ENCODE measurements at regions of chr5 and their contacts with region 1.

Region 1: DNA sequence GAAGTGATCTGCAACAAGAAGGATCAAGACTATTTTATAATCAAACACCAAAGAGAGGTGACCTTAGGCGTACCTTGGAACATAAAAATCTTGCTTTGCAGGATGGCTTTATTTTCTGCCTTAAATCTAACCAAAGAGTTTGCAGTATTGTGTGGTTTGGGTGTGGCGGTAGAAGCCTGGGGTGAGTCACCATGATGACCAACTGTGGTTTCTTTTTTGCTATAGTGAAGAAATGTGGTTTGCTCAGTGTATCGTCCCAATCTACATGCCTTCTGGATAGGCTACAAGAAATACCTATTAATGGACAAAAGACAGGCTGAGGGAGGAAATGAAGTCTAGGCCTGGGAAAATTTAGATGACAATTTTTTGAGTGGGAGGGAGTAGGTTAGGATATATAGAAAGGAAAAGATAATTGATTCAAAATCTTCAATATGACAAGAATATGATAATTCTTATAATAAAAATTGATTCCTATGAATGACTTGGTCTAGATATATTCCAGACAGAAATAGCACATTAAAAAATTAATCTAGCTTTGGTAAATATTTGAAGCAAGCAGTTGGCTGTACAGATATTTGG is 5.0 kb upstream of the CAST start:
- DNase-seq: peak; percentile 73 to 97
- H3K4me3 ChIP-seq: no peak overlapping the region; the same call in 1 of the 2 replicates
- H3K27ac ChIP-seq: peak overlapping the region; percentile 94
- H3K4me1 ChIP-seq: peaks cover 87% of the 10 kb centered on the region
- H3K27me3 ChIP-seq: no peaks in the 10 kb centered on the region
- CTCF ChIP-seq: no peak

Region 2: GRCh38 chr5:94661086-94661485 is 1996.1 kb before region 1 on chr5:
- CTCF ChIA-PET with region 1: no interaction called
- POLR2A ChIA-PET with region 1: no interaction called
- intact Hi-C with region 1: no loop called
- DNase-seq: no peak
- H3K4me3 ChIP-seq: no peak overlapping the region
- H3K27ac ChIP-seq: no peak overlapping the region
- H3K4me1 ChIP-seq: no peaks in the 10 kb centered on the region
- H3K27me3 ChIP-seq: no peaks in the 10 kb centered on the region
- CTCF ChIP-seq: no peak

Region 3: GRCh38 chr5:96645091-96645490 is 12.1 kb before region 1 on chr5:
- CTCF ChIA-PET with region 1: no interaction called
- POLR2A ChIA-PET with region 1: no interaction called
- intact Hi-C with region 1: no loop called
- DNase-seq: no peak
- H3K4me3 ChIP-seq: no peak overlapping the region
- H3K27ac ChIP-seq: no peak overlapping the region
- H3K4me1 ChIP-seq: peaks cover 45% of the 10 kb centered on the region
- H3K27me3 ChIP-seq: no peaks in the 10 kb centered on the region
- CTCF ChIP-seq: no peak

Region 4: GRCh38 chr5:96702503-96703383 is 45.6 kb after region 1 on chr5:
- CTCF ChIA-PET with region 1: no interaction called
- POLR2A ChIA-PET with region 1: interaction called, 14 read pairs
- intact Hi-C with region 1: loop called (anchors 2 kb)
- DNase-seq: peak; percentile 82 to 89
- H3K4me3 ChIP-seq: peak overlapping the region; percentile 63
- H3K27ac ChIP-seq: peak overlapping the region; percentile 92
- H3K4me1 ChIP-seq: peaks cover 74% of the 10 kb centered on the region
- H3K27me3 ChIP-seq: no peaks in the 10 kb centered on the region
- CTCF ChIP-seq: 0 out of 2 replicates have a peak, but pooled peaks have one; percentile 17

Measured in PC-9 (cell line).